PC-9 (cell line): ENCODE measurements at regions of chr6 and their contacts with region 1.

Region 1: GRCh38 chr6:157830354-157831017 is 7.4 kb downstream of the SNX9 start:
- DNase-seq: no peak
- H3K4me3 ChIP-seq: no peak overlapping the region
- H3K27ac ChIP-seq: 0 out of 2 replicates have a peak overlapping the region, but pooled peaks have one; percentile 88
- H3K4me1 ChIP-seq: peaks cover 52% of the 10 kb centered on the region
- H3K27me3 ChIP-seq: no peaks in the 10 kb centered on the region
- CTCF ChIP-seq: no peak

Region 2: GRCh38 chr6:157867155-157867559 is 36.7 kb after region 1 on chr6:
- CTCF ChIA-PET with region 1: no interaction called
- POLR2A ChIA-PET with region 1: no interaction called
- intact Hi-C with region 1: loop called (anchors 5 kb)
- DNase-seq: no peak
- H3K4me3 ChIP-seq: no peak overlapping the region
- H3K27ac ChIP-seq: 0 out of 2 replicates have a peak overlapping the region, but pooled peaks have one; percentile 24
- H3K4me1 ChIP-seq: no peaks in the 10 kb centered on the region
- H3K27me3 ChIP-seq: no peaks in the 10 kb centered on the region
- CTCF ChIP-seq: no peak

Region 3: GRCh38 chr6:157912326-157912725 is 81.8 kb after region 1 on chr6:
- CTCF ChIA-PET with region 1: no interaction called
- POLR2A ChIA-PET with region 1: no interaction called
- intact Hi-C with region 1: no loop called
- DNase-seq: no peak
- H3K4me3 ChIP-seq: no peak overlapping the region
- H3K27ac ChIP-seq: no peak overlapping the region
- H3K4me1 ChIP-seq: no peaks in the 10 kb centered on the region
- H3K27me3 ChIP-seq: no peaks in the 10 kb centered on the region
- CTCF ChIP-seq: no peak